ENCODE measurements at regions of chr12 and their contacts with region 1.

Region 1: GRCh38 chr12:89542912-89543592 is 17.2 kb upstream of the POC1B start:
- DNase-seq: peak; percentile 79
- H3K4me3 ChIP-seq: no peak overlapping the region
- H3K27ac ChIP-seq: no peak overlapping the region
- H3K4me1 ChIP-seq: peaks cover 20% of the 10 kb centered on the region
- H3K27me3 ChIP-seq: no peaks in the 10 kb centered on the region
- CTCF ChIP-seq: peak; percentile 80 to 82
- POLR2A ChIP-seq: no peak

Region 2: GRCh38 chr12:89709157-89709994 is 166.3 kb after region 1 on chr12:
- CTCF ChIA-PET with region 1: interaction called, 5 read pairs
- POLR2A ChIA-PET with region 1: no interaction called
- dilution Hi-C with region 1: no loop called
- intact Hi-C with region 1: loop called (anchors 1 kb)
- DNase-seq: peak; percentile 99
- H3K4me3 ChIP-seq: peak overlapping the region; percentile 48 to 75 (median 73)
- H3K27ac ChIP-seq: peak overlapping the region; percentile 67
- H3K4me1 ChIP-seq: peaks cover 12% of the 10 kb centered on the region
- H3K27me3 ChIP-seq: peaks cover 0 to 16% of the 10 kb centered on the region in 2 experiments
- CTCF ChIP-seq: peak in 1 of 2 donors; percentile 16
- POLR2A ChIP-seq: no peak

Region 3: DNA sequence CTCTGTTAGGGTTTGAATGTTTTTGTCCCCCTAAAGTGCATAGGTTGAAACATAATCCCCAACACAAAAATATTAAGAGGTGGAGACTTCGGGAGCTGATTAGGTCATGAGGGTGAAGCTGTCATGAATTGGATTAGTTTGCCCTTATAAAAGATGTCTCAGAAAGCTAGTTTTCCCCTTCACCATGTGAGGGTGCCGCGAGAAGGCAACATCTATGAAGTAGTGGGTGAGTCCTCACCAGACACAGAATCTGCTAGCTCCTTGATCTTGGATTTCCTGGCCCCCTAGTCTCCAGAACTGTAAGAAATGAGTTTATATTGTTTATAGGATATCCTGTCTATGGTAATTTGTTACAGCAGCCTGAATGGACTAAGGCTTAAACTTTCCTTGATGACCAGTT is 467.0 kb after region 1 on chr12:
- CTCF ChIA-PET with region 1: interaction called, 14 read pairs
- POLR2A ChIA-PET with region 1: no interaction called
- dilution Hi-C with region 1: no loop called
- intact Hi-C with region 1: no loop called
- DNase-seq: peak; percentile 37
- H3K4me3 ChIP-seq: no peak overlapping the region
- H3K27ac ChIP-seq: no peak overlapping the region
- H3K4me1 ChIP-seq: no peaks in the 10 kb centered on the region
- H3K27me3 ChIP-seq: no peaks in the 10 kb centered on the region
- CTCF ChIP-seq: peak in 1 of 2 donors; percentile 14
- POLR2A ChIP-seq: no peak

Region 4: DNA sequence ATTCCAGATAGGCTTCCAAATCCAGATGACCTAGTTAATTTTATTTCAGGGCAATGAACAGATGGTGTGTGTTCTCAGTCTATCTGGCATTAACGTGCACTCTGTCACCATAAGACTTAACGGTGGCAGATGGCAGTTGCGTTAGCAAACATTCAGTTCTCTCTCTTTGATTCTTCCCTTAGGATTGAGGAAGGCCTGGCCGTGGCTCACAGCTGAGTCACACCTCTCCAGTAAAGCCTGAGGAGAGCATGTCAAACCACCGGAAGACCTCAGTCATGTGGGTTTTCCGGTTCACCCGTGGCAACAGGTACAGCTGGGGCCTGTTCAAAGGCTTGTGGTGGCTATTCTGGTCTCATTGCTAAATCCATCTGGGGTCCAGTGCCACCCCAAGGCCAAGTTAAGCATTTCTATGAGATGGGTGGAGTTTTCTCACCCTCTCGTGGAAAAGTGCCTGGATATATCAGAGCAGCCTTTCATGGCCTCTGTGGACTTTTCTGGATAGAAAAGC is 710.7 kb after region 1 on chr12:
- CTCF ChIA-PET with region 1: interaction called, 9 read pairs
- POLR2A ChIA-PET with region 1: no interaction called
- dilution Hi-C with region 1: no loop called
- intact Hi-C with region 1: loop called (anchors 1 kb)
- DNase-seq: peak; percentile 90
- H3K4me3 ChIP-seq: no peak overlapping the region
- H3K27ac ChIP-seq: peak overlapping the region; percentile 47
- H3K4me1 ChIP-seq: peaks cover 21% of the 10 kb centered on the region
- H3K27me3 ChIP-seq: no peaks in the 10 kb centered on the region
- CTCF ChIP-seq: peak; percentile 20 to 53
- POLR2A ChIP-seq: no peak

Region 5: GRCh38 chr12:90695415-90695814 is 1152.4 kb after region 1 on chr12:
- CTCF ChIA-PET with region 1: interaction called, 6 read pairs
- POLR2A ChIA-PET with region 1: no interaction called
- dilution Hi-C with region 1: no loop called
- intact Hi-C with region 1: loop called (anchors 5 kb)
- DNase-seq: peak; percentile 27
- H3K4me3 ChIP-seq: no peak overlapping the region
- H3K27ac ChIP-seq: no peak overlapping the region
- H3K4me1 ChIP-seq: peaks cover 13% of the 10 kb centered on the region
- H3K27me3 ChIP-seq: no peaks in the 10 kb centered on the region
- CTCF ChIP-seq: peak in 1 of 2 donors; percentile 3
- POLR2A ChIP-seq: no peak

Region 6: GRCh38 chr12:90959538-90960139 is 1416.6 kb after region 1 on chr12:
- CTCF ChIA-PET with region 1: interaction called, 25 read pairs
- POLR2A ChIA-PET with region 1: no interaction called
- dilution Hi-C with region 1: no loop called
- intact Hi-C with region 1: loop called (anchors 1 kb)
- DNase-seq: peak; percentile 54
- H3K4me3 ChIP-seq: no peak overlapping the region
- H3K27ac ChIP-seq: no peak overlapping the region
- H3K4me1 ChIP-seq: no peaks in the 10 kb centered on the region
- H3K27me3 ChIP-seq: no peaks in the 10 kb centered on the region
- CTCF ChIP-seq: peak; percentile 57 to 74
- POLR2A ChIP-seq: no peak

Measured in endothelial cell of umbilical vein (primary cell).